ENCODE measurements at regions of chr2 and their contacts with region 1.

Region 1: GRCh38 chr2:88831792-88832248 is 140.3 kb downstream of the RPIA start:
- DNase-seq: peak; percentile 62 to 75 (median 68)
- ATAC-seq: peak; percentile 99
- H3K4me3 ChIP-seq: no peak overlapping the region
- H3K27ac ChIP-seq: no peak overlapping the region
- H3K4me1 ChIP-seq: no peaks in the 10 kb centered on the region
- H3K27me3 ChIP-seq: peaks cover 2 to 25% of the 10 kb centered on the region in 2 experiments; a peak in 3 of 5 replicates
- CTCF ChIP-seq: peak; percentile 86 to 94 (median 89)
- EP300 ChIP-seq: no peak
- POLR2A ChIP-seq: no peak
- RAD21 ChIP-seq: peak; percentile 63 to 83

Region 2: DNA sequence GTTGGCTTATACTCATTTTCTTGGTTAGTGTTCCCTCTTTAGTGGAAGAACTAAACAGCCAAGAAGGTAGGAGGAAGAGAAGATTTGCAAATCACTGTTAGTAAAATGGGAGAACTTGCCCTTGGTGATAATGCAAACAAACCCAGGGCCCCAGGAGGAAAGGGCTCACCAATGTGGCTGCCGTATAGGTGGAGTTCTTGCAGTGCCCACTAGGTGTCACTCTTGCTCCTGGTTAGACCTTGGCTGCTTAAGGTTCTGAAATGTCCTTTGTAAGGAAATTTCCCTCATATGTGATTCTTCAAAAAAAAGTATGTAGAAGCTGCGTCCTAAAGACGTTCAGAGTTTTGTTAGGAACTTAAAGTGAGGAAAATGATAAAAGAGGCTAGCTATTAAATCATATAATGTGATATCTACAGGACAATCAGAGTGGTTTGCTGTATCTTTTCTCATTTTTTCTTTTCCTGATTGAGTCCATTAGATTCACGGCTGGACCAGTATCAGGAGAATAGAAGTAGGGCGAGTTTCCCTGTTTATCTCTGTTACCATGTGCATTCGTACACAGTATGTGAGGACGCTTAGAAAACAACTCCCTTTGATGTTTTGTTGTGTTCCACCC is 91.7 kb before region 1 on chr2:
- CTCF ChIA-PET with region 1: no interaction called
- POLR2A ChIA-PET with region 1: no interaction called
- in situ Hi-C with region 1: no loop called
- intact Hi-C with region 1: loop called (anchors 5 kb)
- DNase-seq: peak; percentile 77 to 81 (median 79)
- ATAC-seq: peak; percentile 94
- H3K4me3 ChIP-seq: no peak overlapping the region
- H3K27ac ChIP-seq: no peak overlapping the region
- H3K4me1 ChIP-seq: peaks cover 3 to 10% of the 10 kb centered on the region in 2 experiments; a peak in 3 of 5 replicates
- H3K27me3 ChIP-seq: no peaks in the 10 kb centered on the region
- CTCF ChIP-seq: peak; percentile 73 to 88 (median 87)
- EP300 ChIP-seq: no peak
- POLR2A ChIP-seq: no peak
- RAD21 ChIP-seq: peak; percentile 53 to 80

Region 3: GRCh38 chr2:88874063-88874657 is 42.3 kb after region 1 on chr2:
- CTCF ChIA-PET with region 1: no interaction called
- POLR2A ChIA-PET with region 1: no interaction called
- in situ Hi-C with region 1: no loop called
- intact Hi-C with region 1: loop called (anchors 5 kb)
- DNase-seq: peak; percentile 44 to 71 (median 50)
- ATAC-seq: peak; percentile 85
- H3K4me3 ChIP-seq: no peak overlapping the region
- H3K27ac ChIP-seq: no peak overlapping the region
- H3K4me1 ChIP-seq: no peaks in the 10 kb centered on the region
- H3K27me3 ChIP-seq: no peaks in the 10 kb centered on the region
- CTCF ChIP-seq: peak; percentile 71 to 88 (median 73)
- EP300 ChIP-seq: no peak
- POLR2A ChIP-seq: no peak
- RAD21 ChIP-seq: peak; percentile 67 to 78

Region 4: GRCh38 chr2:88903749-88904353 is 72.0 kb after region 1 on chr2:
- CTCF ChIA-PET with region 1: interaction called, 4 read pairs
- POLR2A ChIA-PET with region 1: no interaction called
- in situ Hi-C with region 1: no loop called
- intact Hi-C with region 1: loop called (anchors 5 kb)
- DNase-seq: peak; percentile 33 to 55 (median 52)
- ATAC-seq: peak; percentile 86
- H3K4me3 ChIP-seq: no peak overlapping the region
- H3K27ac ChIP-seq: no peak overlapping the region
- H3K4me1 ChIP-seq: no peaks in the 10 kb centered on the region
- H3K27me3 ChIP-seq: no peaks in the 10 kb centered on the region
- CTCF ChIP-seq: peak; percentile 77 to 84 (median 80)
- EP300 ChIP-seq: no peak
- POLR2A ChIP-seq: no peak
- RAD21 ChIP-seq: peak; percentile 41 to 80; a peak in 3 of 4 replicates